Adrenal gland (tissue), 19 donors: ENCODE measurements at regions of chr5 and their contacts with region 1.

Region 1: DNA sequence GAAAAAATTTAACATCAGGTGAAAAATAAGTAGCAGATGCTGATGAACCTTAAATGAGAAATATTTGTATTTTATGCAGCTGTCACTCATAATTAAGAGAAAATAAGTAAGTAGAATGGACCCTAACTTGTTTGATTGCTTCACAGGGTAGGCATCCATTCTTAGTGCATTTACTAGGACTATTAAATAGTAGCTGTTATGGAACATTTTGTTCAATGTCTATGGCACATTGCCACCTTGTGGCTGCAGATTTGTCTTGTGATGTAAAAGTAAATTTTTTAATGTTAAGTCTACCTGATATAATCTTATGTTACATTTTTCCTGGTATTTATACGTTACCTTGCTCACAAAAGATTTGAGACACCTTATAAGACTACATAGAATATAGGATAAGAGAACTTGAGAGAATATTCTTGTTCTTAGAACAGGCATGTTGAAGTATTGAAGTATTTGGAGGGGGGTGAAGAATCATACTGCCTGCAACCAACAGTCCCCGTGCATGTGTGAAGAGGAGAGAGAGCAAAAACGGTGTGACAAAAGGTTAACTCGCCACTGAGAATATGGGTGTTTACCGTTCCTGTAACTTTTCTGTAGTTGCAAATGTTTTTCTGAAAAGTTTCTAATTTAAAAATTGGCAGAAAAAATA is 161.1 kb downstream of the MAST4 start:
- DNase-seq: peak; percentile 49 to 85 (median 59)
- H3K4me3 ChIP-seq: no peak overlapping the region
- H3K27ac ChIP-seq: no peak overlapping the region
- H3K4me1 ChIP-seq: no peaks in the 10 kb centered on the region
- H3K27me3 ChIP-seq: no peaks in the 10 kb centered on the region
- CTCF ChIP-seq: peak; percentile 35 to 74 (median 65)
- POLR2A ChIP-seq: no peak

Region 2: GRCh38 chr5:66306105-66306843 is 451.0 kb before region 1 on chr5:
- intact Hi-C with region 1: loop called (anchors 5 kb)
- DNase-seq: peak; percentile 53 to 84 (median 67)
- H3K4me3 ChIP-seq: no peak overlapping the region
- H3K27ac ChIP-seq: no peak overlapping the region
- H3K4me1 ChIP-seq: no peaks in the 10 kb centered on the region
- H3K27me3 ChIP-seq: no peaks in the 10 kb centered on the region
- CTCF ChIP-seq: peak; percentile 69 to 82 (median 76)
- POLR2A ChIP-seq: no peak

Region 3: DNA sequence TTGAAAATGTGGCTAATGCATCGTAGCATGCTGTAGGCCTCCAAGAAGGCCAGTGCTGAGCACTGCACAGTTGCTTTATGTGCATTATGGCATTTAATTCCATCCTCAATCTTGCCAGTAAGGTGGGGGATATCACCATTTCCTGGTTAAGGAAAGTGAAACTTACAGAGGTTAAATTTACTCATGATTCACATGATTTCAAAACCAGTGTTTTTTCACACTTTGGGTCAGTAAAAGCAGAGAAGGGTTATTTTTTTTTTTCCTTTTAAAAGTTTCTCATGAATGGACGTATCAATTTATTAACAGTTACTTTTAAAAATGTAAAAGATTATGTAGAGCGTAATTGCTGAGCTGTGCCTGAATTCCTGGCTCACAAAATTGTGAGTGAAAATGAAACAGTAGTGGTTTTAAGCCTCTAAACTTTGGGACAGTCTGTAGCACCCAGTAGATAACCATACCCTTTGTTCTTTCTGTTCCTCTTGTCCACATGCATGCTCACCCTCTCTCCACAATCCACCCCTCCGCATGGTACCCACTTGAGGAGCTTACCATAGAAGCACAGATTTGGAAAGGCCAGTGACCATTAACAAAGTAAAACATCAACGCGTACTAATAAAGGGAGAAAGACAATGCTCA is 140.0 kb before region 1 on chr5:
- intact Hi-C with region 1: no loop called
- DNase-seq: no peak
- H3K4me3 ChIP-seq: no peak overlapping the region
- H3K27ac ChIP-seq: peak overlapping the region in 2 of 5 donors; percentile 22 to 57
- H3K4me1 ChIP-seq: peaks cover 13 to 25% of the 10 kb centered on the region in 2 donors
- H3K27me3 ChIP-seq: no peaks in the 10 kb centered on the region
- CTCF ChIP-seq: no peak
- POLR2A ChIP-seq: no peak

Region 4: GRCh38 chr5:66701244-66701643 is 56.1 kb before region 1 on chr5:
- intact Hi-C with region 1: no loop called
- DNase-seq: no peak
- H3K4me3 ChIP-seq: no peak overlapping the region
- H3K27ac ChIP-seq: no peak overlapping the region
- H3K4me1 ChIP-seq: peaks cover 0 to 4% of the 10 kb centered on the region in 2 donors
- H3K27me3 ChIP-seq: no peaks in the 10 kb centered on the region
- CTCF ChIP-seq: no peak
- POLR2A ChIP-seq: no peak

Region 5: DNA sequence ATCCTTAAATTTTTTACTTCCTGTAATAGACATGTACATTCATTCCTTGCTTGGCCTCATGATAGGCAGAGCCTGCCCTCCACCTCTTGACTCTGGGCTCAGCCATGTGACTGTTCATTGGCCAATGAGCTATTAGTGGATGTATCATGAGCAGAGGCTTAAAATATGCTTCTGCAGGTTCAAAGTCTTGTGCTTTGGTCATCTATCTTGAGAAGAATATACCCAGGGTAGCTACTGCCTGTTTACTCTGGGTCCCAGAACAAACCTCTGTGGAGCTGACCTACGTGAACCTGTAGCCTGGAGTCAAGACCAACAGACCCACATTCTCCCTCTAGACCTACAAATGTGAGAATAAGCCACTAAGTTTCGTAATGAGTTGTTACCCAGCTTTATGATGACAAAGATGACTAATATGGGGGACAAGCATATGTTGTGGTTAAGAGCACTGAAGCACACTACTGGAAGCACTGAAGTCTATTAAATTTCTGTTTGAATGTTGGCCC is 83.3 kb after region 1 on chr5:
- intact Hi-C with region 1: no loop called
- DNase-seq: no peak
- H3K4me3 ChIP-seq: no peak overlapping the region
- H3K27ac ChIP-seq: no peak overlapping the region
- H3K4me1 ChIP-seq: no peaks in the 10 kb centered on the region
- H3K27me3 ChIP-seq: no peaks in the 10 kb centered on the region
- CTCF ChIP-seq: no peak
- POLR2A ChIP-seq: no peak